Activated CD8-positive, alpha-beta T cell treated with anti-CD3 and anti-CD28 coated beads, Interleukin-2, amount 10 ng/mL, durations not matched to agents 7 days and 5 days (primary cell): ENCODE measurements at regions of chr6 and their contacts with region 1.

Region 1: GRCh38 chr6:11575408-11576033 is 38.0 kb downstream of the TMEM170B start:
- DNase-seq: peak; percentile 68
- ATAC-seq: peak; percentile 99
- H3K4me3 Mint-ChIP-seq: no peak overlapping the region
- H3K27ac Mint-ChIP-seq: no peak overlapping the region
- H3K4me1 Mint-ChIP-seq: no peaks in the 10 kb centered on the region
- H3K27me3 Mint-ChIP-seq: no peaks in the 10 kb centered on the region

Region 2: GRCh38 chr6:11144393-11144851 is 431.1 kb before region 1 on chr6:
- CTCF ChIA-PET with region 1: interaction called, 11 read pairs
- POLR2A ChIA-PET with region 1: no interaction called
- DNase-seq: peak; percentile 83
- ATAC-seq: peak; percentile 91
- H3K4me3 Mint-ChIP-seq: no peak overlapping the region
- H3K27ac Mint-ChIP-seq: no peak overlapping the region
- H3K4me1 Mint-ChIP-seq: peaks cover 2% of the 10 kb centered on the region
- H3K27me3 Mint-ChIP-seq: no peaks in the 10 kb centered on the region

Region 3: GRCh38 chr6:11535801-11536230 is 39.7 kb before region 1 on chr6:
- CTCF ChIA-PET with region 1: no interaction called
- POLR2A ChIA-PET with region 1: no interaction called
- DNase-seq: peak; percentile 31
- ATAC-seq: no peak
- H3K4me3 Mint-ChIP-seq: no peak overlapping the region
- H3K27ac Mint-ChIP-seq: no peak overlapping the region
- H3K4me1 Mint-ChIP-seq: peaks cover 12% of the 10 kb centered on the region
- H3K27me3 Mint-ChIP-seq: peaks cover 46% of the 10 kb centered on the region

Region 4: GRCh38 chr6:11563793-11564192 is 11.7 kb before region 1 on chr6:
- CTCF ChIA-PET with region 1: interaction called, 23 read pairs
- POLR2A ChIA-PET with region 1: no interaction called
- DNase-seq: no peak
- ATAC-seq: no peak
- H3K4me3 Mint-ChIP-seq: no peak overlapping the region
- H3K27ac Mint-ChIP-seq: no peak overlapping the region
- H3K4me1 Mint-ChIP-seq: no peaks in the 10 kb centered on the region
- H3K27me3 Mint-ChIP-seq: no peaks in the 10 kb centered on the region